ENCODE measurements at regions of chr2 and their contacts with region 1.

Region 1: GRCh38 chr2:20443276-20443920 is 3.5 kb upstream of the RHOB start:
- DNase-seq: no peak
- ATAC-seq: no peak

Region 2: DNA sequence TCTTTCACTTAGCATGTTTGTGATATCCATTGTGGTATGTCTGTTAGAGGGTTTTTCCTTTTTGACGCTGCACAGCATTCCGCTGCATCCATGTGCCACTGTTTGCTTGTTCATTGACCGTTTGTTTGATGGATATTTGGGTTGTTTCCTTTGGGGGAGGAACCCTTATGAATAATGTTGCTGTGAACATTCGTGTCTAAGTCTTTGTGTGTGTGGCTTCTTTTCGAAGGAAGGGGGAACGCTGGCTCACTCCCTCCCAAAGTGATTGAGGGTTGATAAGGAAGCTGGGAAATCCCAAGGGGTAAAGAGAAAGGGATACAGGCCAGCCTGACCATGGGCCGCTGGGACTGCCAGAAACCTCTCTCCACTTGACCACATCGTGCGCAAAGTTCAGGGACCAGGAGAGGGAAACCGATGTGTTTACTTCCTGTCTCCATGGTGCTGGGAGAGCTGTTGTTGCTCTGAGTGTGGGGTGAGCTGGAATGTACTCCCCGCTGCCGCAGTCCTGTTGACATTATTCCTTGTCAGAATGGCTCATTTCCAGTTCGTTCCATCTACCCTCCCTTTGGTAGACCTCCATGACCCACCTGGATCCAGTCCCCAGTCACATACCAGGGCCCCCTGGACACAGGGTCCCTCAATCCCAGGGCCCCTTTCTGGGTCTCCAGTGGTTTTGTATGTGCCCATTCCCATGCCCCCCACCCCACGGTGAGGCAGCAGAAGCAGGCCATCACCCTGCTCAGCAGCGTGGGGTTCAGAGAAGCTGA is 167.9 kb after region 1 on chr2:
- intact Hi-C with region 1: no loop called
- DNase-seq: peak; percentile 84
- ATAC-seq: peak; percentile 89

Region 3: DNA sequence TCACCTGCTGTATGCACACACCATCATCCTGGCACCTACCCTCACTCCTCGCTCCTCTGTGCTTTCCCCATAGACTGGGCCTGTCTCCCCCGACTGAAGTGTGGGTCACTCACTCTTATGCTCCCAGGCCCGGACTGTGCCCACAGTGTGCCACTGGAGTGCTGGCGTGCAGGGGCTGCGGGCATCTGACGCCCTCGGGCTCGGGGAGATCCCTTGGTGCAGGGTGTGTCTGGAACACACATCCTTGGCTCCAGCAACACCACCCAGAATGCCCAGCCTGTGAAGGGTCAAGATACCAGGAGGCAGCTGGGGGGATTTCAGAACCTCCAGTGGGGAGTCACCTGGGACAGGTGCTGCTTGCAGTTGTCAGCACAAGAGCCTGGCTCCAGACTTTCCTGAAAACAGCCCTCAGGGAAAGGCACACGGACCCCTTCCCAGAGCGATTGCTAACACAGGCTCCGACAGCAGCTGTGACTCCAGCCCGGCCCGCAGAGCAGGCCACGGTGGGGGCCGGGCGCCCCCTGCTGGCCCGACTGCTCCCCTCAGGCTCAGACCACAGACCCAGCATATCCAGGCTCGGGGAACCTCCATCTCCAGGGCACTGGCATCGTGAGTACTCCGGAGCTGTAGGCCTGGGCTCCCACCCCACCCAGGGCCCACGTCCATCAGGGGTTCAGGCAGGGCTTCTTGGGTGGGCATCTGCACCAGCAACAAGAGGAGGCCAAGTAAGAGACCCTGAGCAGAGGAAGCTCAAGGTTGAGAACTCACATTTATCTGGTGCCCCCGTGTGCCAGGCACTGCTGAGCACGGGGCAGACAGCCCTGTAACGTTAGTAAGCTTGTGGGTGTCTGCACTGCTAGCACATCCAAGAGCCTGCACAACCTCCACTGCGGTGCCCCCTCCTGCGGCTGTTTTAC is 198.9 kb after region 1 on chr2:
- intact Hi-C with region 1: loop called (anchors 1 kb)
- DNase-seq: peak; percentile 92
- ATAC-seq: peak; percentile 92

Measured in Right ventricle myocardium inferior (tissue), 1 donor.